CD8-positive, alpha-beta T cell (primary cell): ENCODE measurements at regions of chr20 and their contacts with region 1.

Region 1: DNA sequence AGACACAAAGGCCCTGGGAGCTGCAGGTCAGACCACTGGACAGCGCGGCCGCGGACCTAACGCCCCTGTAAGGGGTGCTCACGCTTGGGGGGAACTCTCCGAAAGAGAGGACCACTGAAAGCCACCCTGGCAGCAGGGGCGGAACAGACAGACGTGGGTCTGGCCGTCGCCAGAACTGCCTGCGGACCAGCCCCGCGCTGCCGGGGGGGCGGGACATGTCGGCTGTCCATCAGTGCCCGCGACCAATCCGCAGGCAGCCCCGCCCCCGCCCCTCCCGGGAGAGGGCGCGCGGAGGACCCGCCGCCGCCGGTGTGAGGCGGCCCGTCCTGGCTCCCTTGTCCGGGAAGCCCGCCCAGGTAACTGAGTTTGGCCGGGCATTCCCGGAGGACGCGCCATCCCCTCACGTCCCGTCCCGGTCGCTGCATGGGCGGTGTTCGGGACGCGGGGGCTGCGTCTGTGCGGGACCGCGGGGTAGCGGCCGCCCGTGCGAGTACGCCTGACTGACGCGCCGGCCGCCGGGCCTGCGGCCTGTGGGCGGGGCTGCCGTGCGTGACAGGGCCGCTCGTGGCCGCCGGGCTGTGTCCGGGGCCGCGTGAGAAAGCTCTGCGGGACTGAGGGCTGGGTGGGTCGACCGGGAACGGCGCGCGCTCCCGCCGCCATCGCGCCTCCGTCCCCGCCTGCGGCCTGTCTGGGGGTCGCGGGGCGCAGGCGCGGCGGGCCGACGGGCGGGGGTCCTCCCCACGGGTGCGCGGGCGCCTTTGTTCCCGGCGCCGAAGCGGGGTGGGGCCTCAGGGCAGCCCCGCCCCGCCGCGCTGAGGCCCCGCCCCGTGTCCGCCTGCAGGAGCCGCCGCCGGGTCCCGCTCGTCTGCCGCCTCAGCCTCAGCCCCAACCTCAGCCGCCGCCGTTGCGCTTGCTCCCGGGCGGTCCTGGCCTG is at the start of gene PLCG1:
- DNase-seq: peak; percentile 61 to 90 (median 83)
- ATAC-seq: peak; percentile 70
- H3K4me3 ChIP-seq: peak within 1 kb of the TSS; percentile 72 to 81
- H3K4me3 Mint-ChIP-seq: peak within 1 kb of the TSS; percentile 92
- H3K27ac ChIP-seq: peak within 1 kb of the TSS; percentile 60 to 89
- H3K27ac Mint-ChIP-seq: peak within 1 kb of the TSS; percentile 93
- H3K4me1 ChIP-seq: peaks cover 58% of the 10 kb centered on the region
- H3K4me1 Mint-ChIP-seq: peaks cover 63% of the 10 kb centered on the region
- H3K27me3 ChIP-seq: no peaks in the 10 kb centered on the region
- H3K27me3 Mint-ChIP-seq: no peaks in the 10 kb centered on the region
- CTCF ChIP-seq: no peak
- total RNA-seq, gene PLCG1: 335 to 366 TPM

Region 2: DNA sequence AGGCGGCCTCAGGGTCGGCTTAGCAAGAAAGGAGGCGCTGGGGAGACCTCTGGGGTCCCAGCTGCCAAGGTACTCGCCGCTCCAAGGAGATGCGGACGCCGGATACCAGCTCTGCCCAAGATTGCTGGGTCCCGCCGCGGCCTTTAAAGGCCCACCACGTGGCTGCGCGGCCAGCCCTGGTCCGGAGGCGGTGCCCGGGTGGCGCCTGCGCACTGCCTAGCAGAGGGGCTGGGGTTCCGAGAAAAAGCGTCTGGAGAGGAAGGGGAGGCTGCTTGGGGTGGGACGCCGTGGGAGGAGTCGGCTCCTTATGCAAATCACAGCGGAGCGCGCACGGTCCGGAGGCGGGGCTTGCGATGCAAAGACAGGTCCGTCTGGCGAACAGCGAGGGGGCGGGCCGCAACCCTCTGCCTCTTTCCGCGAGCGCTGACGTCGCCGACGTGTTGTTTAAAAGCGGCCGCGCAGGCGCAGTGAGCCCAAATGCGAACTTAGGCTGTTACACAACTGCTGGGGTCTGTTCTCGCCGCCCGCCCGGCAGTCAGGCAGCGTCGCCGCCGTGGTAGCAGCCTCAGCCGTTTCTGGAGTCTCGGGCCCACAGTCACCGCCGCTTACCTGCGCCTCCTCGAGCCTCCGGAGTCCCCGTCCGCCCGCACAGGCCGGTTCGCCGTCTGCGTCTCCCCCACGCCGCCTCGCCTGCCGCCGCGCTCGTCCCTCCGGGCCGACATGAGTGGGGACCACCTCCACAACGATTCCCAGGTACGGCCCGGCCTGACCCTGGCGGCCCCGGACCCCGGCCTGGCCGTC is 108.4 kb before region 1 on chr20 and contains the start of gene TOP1:
- CTCF ChIA-PET with region 1: interaction called, 3 read pairs
- POLR2A ChIA-PET with region 1: no interaction called
- intact Hi-C with region 1: loop called (anchors 1 kb)
- DNase-seq: peak; percentile 99 to 100 (median 100)
- ATAC-seq: peak; percentile 97
- H3K4me3 ChIP-seq: peak within 1 kb of the TSS; percentile 72 to 76
- H3K4me3 Mint-ChIP-seq: peak within 1 kb of the TSS; percentile 92
- H3K27ac ChIP-seq: peak within 1 kb of the TSS; percentile 94 to 95
- H3K27ac Mint-ChIP-seq: peak within 1 kb of the TSS; percentile 99
- H3K4me1 ChIP-seq: peaks cover 45% of the 10 kb centered on the region
- H3K4me1 Mint-ChIP-seq: peaks cover 46% of the 10 kb centered on the region
- H3K27me3 ChIP-seq: no peaks in the 10 kb centered on the region
- H3K27me3 Mint-ChIP-seq: no peaks in the 10 kb centered on the region
- CTCF ChIP-seq: no peak
- total RNA-seq, gene TOP1: 58.5 to 61.1 TPM

Region 3: DNA sequence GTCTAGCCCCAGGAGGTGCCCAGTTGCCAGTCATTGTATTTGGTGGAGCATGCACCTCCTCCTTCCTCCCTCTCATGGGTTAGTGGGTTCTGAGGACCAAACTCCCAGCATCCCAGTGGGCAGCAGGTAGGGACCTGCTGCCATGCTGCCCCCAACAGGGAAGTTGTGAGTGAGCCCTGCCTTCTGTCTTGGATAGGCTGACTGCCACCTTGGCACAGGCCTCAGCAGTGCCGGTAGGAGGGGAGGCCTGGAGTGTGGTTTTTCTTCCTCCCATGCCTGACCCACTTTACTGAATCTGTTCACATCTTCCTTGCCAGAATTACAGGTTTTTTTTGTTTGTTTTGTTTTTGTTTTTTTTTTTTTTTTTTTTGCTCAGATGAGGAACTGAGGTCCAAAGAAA is 24.9 kb after region 1 on chr20:
- CTCF ChIA-PET with region 1: interaction called, 165 read pairs
- POLR2A ChIA-PET with region 1: interaction called, 317 read pairs
- intact Hi-C with region 1: loop called (anchors 1 kb)
- DNase-seq: peak in 3 of 9 experiments; percentile 25 to 49 (median 45)
- ATAC-seq: no peak
- H3K4me3 ChIP-seq: no peak overlapping the region
- H3K4me3 Mint-ChIP-seq: peak overlapping the region; percentile 58
- H3K27ac ChIP-seq: peak overlapping the region; percentile 39 to 82
- H3K27ac Mint-ChIP-seq: peak overlapping the region; percentile 92
- H3K4me1 ChIP-seq: peaks cover 88% of the 10 kb centered on the region
- H3K4me1 Mint-ChIP-seq: peaks cover 86% of the 10 kb centered on the region
- H3K27me3 ChIP-seq: no peaks in the 10 kb centered on the region
- H3K27me3 Mint-ChIP-seq: no peaks in the 10 kb centered on the region
- CTCF ChIP-seq: no peak

Region 4: GRCh38 chr20:41185013-41185757 is 48.2 kb after region 1 on chr20:
- CTCF ChIA-PET with region 1: interaction called, 10 read pairs
- POLR2A ChIA-PET with region 1: no interaction called
- intact Hi-C with region 1: no loop called
- DNase-seq: peak in 1 of 9 experiments; percentile 43
- ATAC-seq: no peak
- H3K4me3 ChIP-seq: no peak overlapping the region
- H3K4me3 Mint-ChIP-seq: no peak overlapping the region
- H3K27ac ChIP-seq: no peak overlapping the region
- H3K27ac Mint-ChIP-seq: peak overlapping the region; percentile 62
- H3K4me1 ChIP-seq: peaks cover 8% of the 10 kb centered on the region
- H3K4me1 Mint-ChIP-seq: peaks cover 10% of the 10 kb centered on the region
- H3K27me3 ChIP-seq: no peaks in the 10 kb centered on the region
- H3K27me3 Mint-ChIP-seq: no peaks in the 10 kb centered on the region
- CTCF ChIP-seq: no peak

Region 5: GRCh38 chr20:41232973-41233926 is 96.3 kb after region 1 on chr20:
- CTCF ChIA-PET with region 1: interaction called, 122 read pairs
- POLR2A ChIA-PET with region 1: interaction called, 11 read pairs
- intact Hi-C with region 1: loop called (anchors 1 kb)
- DNase-seq: peak in 1 of 9 experiments; percentile 6
- ATAC-seq: no peak
- H3K4me3 ChIP-seq: no peak overlapping the region
- H3K4me3 Mint-ChIP-seq: no peak overlapping the region
- H3K27ac ChIP-seq: no peak overlapping the region
- H3K27ac Mint-ChIP-seq: no peak overlapping the region
- H3K4me1 ChIP-seq: peaks cover 12% of the 10 kb centered on the region
- H3K4me1 Mint-ChIP-seq: peaks cover 23% of the 10 kb centered on the region
- H3K27me3 ChIP-seq: no peaks in the 10 kb centered on the region
- H3K27me3 Mint-ChIP-seq: no peaks in the 10 kb centered on the region
- CTCF ChIP-seq: no peak

Region 6: DNA sequence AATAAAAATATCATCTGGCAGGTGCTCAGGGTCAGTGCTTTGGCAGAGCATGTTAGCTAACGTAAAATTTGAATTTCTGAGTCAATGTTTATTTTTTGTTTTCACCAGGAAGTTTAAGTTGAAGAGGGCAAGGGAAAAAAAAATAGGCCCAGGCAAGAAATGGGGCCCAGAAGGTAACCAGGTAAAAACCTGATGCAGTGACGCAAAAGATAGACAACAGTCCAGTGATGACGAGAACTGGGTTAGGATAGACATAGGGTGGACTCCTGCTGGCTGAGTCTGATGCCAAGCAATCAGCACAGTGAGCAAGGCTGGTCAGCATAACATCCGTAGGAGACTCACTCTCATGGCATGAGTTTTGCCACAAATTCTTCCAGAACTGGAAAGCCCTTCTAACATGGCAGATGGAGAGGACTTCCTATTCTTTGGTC is 138.4 kb after region 1 on chr20:
- CTCF ChIA-PET with region 1: no interaction called
- POLR2A ChIA-PET with region 1: no interaction called
- intact Hi-C with region 1: no loop called
- DNase-seq: no peak
- ATAC-seq: no peak
- H3K4me3 ChIP-seq: no peak overlapping the region
- H3K4me3 Mint-ChIP-seq: no peak overlapping the region
- H3K27ac ChIP-seq: no peak overlapping the region
- H3K27ac Mint-ChIP-seq: no peak overlapping the region
- H3K4me1 ChIP-seq: no peaks in the 10 kb centered on the region
- H3K4me1 Mint-ChIP-seq: peaks cover 10% of the 10 kb centered on the region
- H3K27me3 ChIP-seq: no peaks in the 10 kb centered on the region
- H3K27me3 Mint-ChIP-seq: no peaks in the 10 kb centered on the region
- CTCF ChIP-seq: no peak

Region 7: DNA sequence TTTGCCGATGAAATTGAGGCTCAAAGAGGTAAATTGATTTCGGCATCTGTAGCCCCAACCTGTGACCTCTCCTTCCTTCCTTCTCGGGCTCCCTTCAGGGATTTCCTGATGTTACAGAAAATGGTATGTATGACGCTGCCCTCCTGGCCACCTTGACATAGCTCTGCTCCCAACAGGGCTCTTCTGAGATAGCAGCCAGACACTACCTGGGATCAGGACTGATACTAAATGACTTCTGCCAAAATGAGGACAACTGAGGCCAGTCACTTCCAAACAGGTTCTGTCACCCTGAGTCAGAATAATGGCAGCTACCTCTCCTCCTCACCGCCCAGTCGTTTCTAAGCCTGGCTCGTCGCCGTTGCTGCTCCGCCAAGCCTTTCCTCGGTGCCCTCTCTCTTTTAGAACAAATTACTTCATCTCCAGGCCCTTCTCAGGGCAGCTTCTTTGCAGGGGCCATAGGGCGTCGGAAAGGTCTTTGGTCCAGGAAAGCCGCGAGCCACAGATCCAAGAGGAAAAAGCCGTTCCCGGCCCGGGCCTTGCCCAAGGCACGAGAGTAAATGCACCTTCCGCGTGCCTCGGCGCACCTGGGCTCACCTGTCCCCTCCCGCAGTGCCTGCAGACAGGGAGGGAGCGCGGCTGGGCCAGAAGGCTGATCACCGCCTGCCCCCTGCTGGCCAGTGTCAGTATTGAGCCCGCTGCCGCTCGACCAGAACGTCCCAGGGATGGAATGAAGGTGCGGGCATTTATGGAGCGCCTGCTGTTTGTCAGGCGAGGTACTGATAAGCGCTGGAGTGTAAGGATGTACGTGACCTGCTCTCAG is 202.8 kb after region 1 on chr20:
- CTCF ChIA-PET with region 1: interaction called, 141 read pairs
- POLR2A ChIA-PET with region 1: interaction called, 4 read pairs
- intact Hi-C with region 1: loop called (anchors 1 kb)
- DNase-seq: peak; percentile 71 to 92 (median 86)
- ATAC-seq: peak; percentile 99
- H3K4me3 ChIP-seq: peak overlapping the region; percentile 15 to 25
- H3K4me3 Mint-ChIP-seq: peak overlapping the region; percentile 58
- H3K27ac ChIP-seq: no peak overlapping the region
- H3K27ac Mint-ChIP-seq: no peak overlapping the region
- H3K4me1 ChIP-seq: peaks cover 9% of the 10 kb centered on the region
- H3K4me1 Mint-ChIP-seq: peaks cover 9% of the 10 kb centered on the region
- H3K27me3 ChIP-seq: peaks cover 0 to 3% of the 10 kb centered on the region in 2 experiments
- H3K27me3 Mint-ChIP-seq: peaks cover 8% of the 10 kb centered on the region
- CTCF ChIP-seq: peak; percentile 99